ENCODE measurements at regions of chr19 and their contacts with region 1.

Region 1: GRCh38 chr19:2041683-2042484 is 9.2 kb downstream of the MKNK2 start:
- DNase-seq: peak; percentile 99
- ATAC-seq: peak; percentile 88
- H3K4me3 Mint-ChIP-seq: peak overlapping the region; percentile 72
- H3K27ac Mint-ChIP-seq: peak overlapping the region; percentile 87
- H3K4me1 Mint-ChIP-seq: peaks cover 31% of the 10 kb centered on the region
- H3K27me3 Mint-ChIP-seq: no peaks in the 10 kb centered on the region
- CTCF ChIP-seq: no peak

Region 2: GRCh38 chr19:2016041-2016807 is 25.7 kb before region 1 on chr19:
- CTCF ChIA-PET with region 1: interaction called, 12 read pairs
- POLR2A ChIA-PET with region 1: interaction called, 5 read pairs
- intact Hi-C with region 1: no loop called
- DNase-seq: peak; percentile 75
- ATAC-seq: peak; percentile 83
- H3K4me3 Mint-ChIP-seq: peak overlapping the region; percentile 69
- H3K27ac Mint-ChIP-seq: no peak overlapping the region
- H3K4me1 Mint-ChIP-seq: peaks cover 20% of the 10 kb centered on the region
- H3K27me3 Mint-ChIP-seq: no peaks in the 10 kb centered on the region
- CTCF ChIP-seq: no peak

Region 3: DNA sequence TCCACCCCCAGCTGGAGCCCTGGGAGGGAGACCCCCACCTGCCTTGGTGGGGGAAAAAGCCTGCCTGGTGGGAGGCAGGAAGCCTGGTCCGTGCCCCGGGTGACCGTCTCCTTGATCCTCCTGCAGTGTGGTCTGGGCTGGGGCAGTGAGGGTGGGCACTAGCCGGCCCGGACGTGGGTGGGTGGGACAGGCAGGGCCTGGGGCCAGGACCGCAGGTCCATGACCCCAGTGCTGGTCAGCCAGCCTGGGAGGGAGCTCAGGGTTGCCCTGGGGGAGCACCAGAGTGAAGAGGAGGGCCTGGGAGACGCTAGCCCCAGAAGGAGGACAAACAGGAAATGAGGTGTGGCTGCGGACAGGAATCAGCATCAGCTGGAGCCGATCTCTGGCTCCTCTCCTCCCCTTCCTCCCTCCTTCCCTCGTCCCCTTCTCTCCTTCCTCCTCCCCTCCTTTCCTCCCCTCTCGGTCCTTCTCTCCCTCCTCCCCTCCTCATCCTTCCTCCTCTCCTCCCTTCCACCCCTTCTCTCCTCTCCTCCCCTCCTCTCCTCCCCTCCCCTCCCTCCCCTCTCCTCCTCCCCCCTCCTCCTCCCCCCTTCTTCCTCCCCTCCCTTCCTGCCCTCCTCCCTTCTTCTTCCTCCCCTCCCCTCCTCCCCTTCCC is 14.4 kb after region 1 on chr19:
- CTCF ChIA-PET with region 1: interaction called, 3 read pairs
- POLR2A ChIA-PET with region 1: interaction called, 58 read pairs
- intact Hi-C with region 1: no loop called
- DNase-seq: peak; percentile 54
- ATAC-seq: no peak
- H3K4me3 Mint-ChIP-seq: peak overlapping the region; percentile 63
- H3K27ac Mint-ChIP-seq: peak overlapping the region; percentile 93
- H3K4me1 Mint-ChIP-seq: peaks cover 63% of the 10 kb centered on the region
- H3K27me3 Mint-ChIP-seq: no peaks in the 10 kb centered on the region
- CTCF ChIP-seq: no peak

Measured in activated CD8-positive, alpha-beta T cell treated with anti-CD3 and anti-CD28 coated beads for 36 hours (primary cell).